ENCODE measurements at regions of chr19 and their contacts with region 1.

Region 1: DNA sequence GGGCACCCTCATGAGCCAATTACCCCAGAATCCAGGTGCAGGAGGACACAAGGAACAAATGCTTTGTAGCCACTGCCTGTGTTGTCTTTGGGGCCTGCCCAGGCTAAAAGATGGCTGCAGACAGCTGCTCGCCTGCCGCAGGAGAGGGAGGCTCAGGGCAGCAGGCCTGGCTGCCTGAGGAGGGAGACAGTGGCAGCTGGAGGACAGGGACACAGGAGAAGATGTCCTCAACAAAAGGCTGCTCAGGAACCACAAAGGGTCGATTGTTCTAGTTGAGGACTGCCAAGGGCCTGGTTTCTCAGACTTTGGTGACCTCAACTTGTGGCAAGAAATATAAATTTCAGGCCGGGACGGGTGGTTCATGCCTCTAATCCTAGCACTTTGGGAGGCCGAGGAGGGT is 7.6 kb downstream of the SIRT2 start:
- H3K4me3 ChIP-seq: no peak overlapping the region
- H3K27ac ChIP-seq: no peak overlapping the region
- H3K4me1 ChIP-seq: peaks cover 3% of the 10 kb centered on the region; the same call in 1 of the 2 replicates
- CTCF ChIP-seq: no peak

Region 2: DNA sequence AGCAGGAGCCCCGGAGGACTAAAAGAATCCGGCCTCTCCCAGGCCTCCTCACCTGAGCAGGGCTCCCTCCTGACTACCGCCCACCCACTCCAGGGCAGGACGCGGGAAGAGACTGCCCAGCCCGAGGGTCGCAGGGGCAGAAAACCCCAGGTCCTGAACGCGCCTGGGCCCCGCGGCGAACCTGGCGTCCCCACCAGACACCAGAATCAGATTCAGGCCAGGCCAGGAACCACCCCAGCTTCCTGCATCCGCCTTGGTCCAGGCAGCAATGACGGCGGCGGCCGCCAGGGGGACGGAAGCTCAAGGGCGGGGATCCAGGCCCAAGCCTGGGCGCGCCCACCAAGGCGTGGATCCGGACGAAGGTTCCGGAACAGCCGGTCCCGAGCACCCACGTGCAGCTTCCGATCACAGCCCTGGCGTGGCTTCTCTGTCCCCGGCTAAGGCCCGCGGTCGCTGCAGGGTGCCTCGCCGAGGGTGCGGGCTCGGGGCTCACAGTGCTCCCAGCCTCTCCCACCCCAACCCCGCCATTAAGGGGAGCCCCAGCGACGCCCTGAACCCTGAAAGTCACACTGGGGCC is 122.0 kb before region 1 on chr19:
- CTCF ChIA-PET with region 1: interaction called, 18 read pairs
- POLR2A ChIA-PET with region 1: no interaction called
- H3K4me3 ChIP-seq: no peak overlapping the region
- H3K27ac ChIP-seq: peak overlapping the region; percentile 52; the same call in 1 of the 2 replicates
- H3K4me1 ChIP-seq: no peaks in the 10 kb centered on the region
- CTCF ChIP-seq: peak; percentile 46; the same call in 1 of the 2 replicates

Region 3: DNA sequence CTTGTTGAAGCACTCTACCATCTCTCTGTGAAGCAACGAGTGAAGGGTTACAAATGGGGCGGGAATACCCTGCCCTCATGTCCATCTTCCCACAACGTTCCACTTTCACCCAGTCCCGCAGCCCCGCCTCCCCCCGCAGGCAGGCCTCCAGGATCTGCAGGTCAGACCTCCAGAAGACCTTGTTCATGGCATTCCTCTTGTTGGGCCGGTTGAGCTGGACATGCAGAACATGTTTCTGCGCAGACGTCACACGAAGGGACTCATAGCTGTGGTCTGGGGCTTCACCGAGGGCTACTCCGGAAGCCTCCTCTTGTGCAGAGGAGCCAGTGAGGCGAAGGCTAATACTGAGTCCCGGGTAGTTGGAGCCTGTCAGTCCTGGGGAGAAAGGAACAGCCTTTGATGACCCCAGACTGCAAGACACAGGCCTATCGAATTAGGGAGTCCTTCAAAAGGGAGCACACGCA is 60.6 kb before region 1 on chr19:
- CTCF ChIA-PET with region 1: interaction called, 10 read pairs
- POLR2A ChIA-PET with region 1: no interaction called
- H3K4me3 ChIP-seq: peak overlapping the region; percentile 59
- H3K27ac ChIP-seq: peak overlapping the region; percentile 82; the same call in 1 of the 2 replicates
- H3K4me1 ChIP-seq: peaks cover 19% of the 10 kb centered on the region
- CTCF ChIP-seq: no peak

Region 4: DNA sequence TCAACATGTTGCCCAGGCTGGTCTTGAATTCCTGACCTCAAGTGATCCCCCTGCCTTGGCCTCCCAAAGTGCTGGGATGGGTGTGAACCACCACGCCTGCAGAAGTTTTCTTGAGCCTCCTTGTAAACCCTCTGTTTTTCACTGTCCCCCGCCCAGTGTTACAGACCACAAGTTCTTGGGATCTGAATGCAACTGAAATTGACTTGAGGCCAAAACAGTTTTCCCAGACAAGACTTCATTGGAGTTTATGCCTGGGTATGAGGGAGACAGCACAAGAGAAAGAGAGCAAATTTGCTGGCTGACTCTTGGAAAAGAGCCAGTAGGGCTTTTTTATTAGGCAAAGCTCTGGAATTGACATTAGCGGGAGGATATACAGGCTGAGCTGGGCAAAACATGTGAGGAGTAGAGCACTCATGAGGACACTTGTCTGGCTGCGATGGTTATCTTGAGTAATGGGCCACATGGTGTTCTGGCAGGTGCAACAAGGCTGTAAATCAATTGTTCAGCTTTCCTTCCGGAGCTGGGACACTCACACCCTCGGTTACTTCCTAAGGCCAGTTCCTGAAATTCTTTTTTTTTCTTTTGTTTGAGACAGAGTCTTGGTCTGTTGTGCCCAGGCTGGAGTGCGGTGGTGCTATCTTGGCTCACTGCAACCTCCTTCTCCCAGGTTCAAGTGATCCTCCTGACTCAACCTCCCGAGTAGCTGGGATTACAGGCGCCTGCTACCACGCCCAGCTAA is 29.3 kb before region 1 on chr19:
- CTCF ChIA-PET with region 1: interaction called, 48 read pairs
- POLR2A ChIA-PET with region 1: interaction called, 4 read pairs
- H3K4me3 ChIP-seq: no peak overlapping the region
- H3K27ac ChIP-seq: peak overlapping the region; percentile 91
- H3K4me1 ChIP-seq: peaks cover 18% of the 10 kb centered on the region
- CTCF ChIP-seq: no peak

Region 5: DNA sequence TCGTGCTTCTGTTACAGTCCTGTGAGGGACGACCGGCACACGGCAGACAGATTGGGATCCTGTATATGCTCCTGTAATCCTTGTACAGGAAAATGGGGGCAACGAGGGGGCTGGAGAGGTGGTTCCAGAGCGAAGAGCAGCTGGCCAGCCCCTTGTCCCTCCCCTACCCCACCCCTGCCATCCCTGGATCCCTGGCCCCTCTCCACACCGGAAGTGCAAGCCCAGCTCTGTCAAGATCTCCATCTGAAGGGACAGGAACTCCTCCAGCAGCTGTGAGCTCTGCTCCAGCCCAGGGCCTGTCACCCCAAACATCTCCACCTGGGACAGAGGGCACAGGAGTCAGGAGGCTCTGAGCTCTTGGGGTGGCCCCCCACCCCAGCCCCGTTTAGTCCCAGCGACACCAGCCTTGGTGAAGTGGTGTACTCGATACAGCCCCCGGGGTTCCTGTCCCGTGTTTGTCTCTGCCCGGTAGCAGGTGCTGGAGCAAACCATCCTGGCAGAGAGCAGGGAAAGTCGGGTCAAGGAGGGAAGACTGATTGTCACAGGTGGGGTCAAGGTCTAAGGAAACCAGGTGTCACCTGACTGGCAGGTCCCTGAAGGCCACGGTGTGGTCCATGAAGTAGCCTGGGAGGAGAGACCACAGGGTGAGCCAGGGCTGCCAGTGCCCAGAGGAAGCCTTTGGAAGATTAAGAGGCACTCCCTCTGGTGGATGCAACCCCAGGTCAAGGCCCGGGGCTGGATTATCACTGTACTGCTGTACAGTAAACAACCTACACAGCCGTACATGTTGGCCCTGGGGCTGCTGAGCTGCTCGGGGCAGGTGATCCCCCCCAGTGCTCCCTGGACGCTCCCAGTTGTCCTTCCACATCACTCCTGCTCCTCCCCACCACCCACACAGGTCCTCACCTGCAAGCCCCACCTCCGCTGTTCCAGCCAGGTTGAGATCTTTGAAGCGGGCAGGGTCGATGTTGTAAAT is 26.0 kb after region 1 on chr19:
- CTCF ChIA-PET with region 1: interaction called, 10 read pairs
- POLR2A ChIA-PET with region 1: interaction called, 5 read pairs
- H3K4me3 ChIP-seq: no peak overlapping the region
- H3K27ac ChIP-seq: peak overlapping the region; percentile 17; the same call in 1 of the 2 replicates
- H3K4me1 ChIP-seq: no peaks in the 10 kb centered on the region
- CTCF ChIP-seq: peak; percentile 62

Region 6: DNA sequence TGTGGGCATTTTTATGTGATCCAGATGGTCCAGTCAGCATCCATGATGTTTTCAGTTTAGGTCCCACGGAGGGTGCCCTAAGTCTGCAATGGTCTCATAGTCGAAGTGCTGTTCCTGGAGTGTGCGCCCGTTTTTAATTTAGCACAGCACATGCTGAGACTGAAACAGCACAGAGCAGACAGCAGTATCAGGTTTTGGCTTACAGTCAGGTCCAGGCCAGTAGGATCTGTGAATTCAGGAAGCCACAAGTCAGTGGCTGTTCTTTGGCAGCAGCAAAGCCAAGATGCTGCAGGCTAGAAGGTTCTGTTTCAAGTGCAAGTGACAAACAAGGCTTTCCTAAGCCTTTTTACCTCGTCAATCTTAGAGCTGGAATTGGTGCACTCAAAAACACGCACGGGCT is 122.3 kb after region 1 on chr19:
- CTCF ChIA-PET with region 1: no interaction called
- POLR2A ChIA-PET with region 1: no interaction called
- H3K4me3 ChIP-seq: no peak overlapping the region
- H3K27ac ChIP-seq: no peak overlapping the region
- H3K4me1 ChIP-seq: no peaks in the 10 kb centered on the region
- CTCF ChIP-seq: no peak

Region 7: DNA sequence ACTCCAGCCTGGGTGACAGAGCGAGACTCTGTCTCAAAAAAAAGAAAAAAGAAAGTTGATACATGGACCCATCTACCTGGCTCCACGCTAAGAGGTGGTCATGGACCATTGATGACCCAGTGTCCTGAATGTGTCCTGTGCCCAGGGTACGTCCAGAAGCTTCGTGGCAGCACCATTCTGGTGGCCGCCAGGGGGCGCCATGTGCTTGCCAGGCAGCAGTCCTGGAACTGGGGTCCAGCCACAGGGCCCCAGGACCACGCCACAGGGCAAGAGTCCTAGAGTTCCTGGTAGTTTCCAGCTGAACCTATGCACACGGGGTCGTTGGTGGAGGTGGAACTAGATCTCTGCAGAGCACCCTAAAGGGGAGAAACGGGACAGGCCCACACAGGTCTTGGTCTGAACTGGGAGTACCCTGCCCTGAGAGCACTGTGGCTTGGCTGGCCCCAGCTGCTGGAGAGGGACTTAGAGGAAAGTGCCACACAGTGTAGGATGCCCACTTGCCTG is 160.5 kb after region 1 on chr19:
- CTCF ChIA-PET with region 1: no interaction called
- POLR2A ChIA-PET with region 1: no interaction called
- H3K4me3 ChIP-seq: no peak overlapping the region
- H3K27ac ChIP-seq: no peak overlapping the region
- H3K4me1 ChIP-seq: no peaks in the 10 kb centered on the region
- CTCF ChIP-seq: peak; percentile 98

Region 8: DNA sequence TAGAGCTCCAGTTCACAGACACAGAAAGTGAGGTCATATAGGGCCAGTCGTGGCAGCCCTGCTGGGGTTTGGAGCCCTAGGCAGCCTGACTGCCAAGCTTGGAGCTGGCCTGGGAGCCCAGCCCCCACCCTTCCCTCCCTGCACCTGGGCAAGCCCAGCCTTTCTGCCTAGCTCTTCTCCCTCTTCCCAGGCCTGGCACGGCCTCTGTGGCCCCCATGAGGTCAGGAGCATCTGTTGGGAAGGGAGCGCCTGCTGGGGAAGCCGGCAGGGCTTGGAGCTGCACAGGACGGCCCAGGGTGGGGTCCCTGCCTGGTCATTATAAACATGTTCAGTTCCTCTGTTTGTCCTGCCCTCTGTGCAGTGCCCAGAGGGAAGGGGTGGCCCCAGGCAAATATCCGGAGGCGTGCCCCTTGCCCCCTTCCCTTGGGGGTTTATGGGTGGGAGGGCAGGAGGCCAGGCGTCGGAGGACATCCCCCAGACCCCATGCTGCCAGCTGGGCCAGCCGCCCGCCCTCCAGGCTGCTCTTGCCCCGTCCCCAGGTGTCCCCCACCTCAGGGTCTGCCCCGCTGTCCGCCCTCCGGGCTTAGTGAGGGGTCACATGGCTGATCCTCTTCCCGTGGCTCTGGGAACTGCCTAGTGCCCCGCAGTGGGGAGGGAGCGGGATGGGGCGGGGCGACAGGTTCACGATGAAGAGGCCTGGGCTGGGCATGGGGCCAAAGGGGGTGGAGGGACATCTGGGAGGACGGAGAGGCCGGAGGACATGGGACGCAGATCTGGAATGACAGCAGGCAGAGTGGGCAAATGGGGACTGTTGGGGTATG is 275.0 kb after region 1 on chr19:
- CTCF ChIA-PET with region 1: no interaction called
- POLR2A ChIA-PET with region 1: no interaction called
- H3K4me3 ChIP-seq: no peak overlapping the region
- H3K27ac ChIP-seq: peak overlapping the region; percentile 46; the same call in 1 of the 2 replicates
- H3K4me1 ChIP-seq: peaks cover 9% of the 10 kb centered on the region
- CTCF ChIP-seq: no peak